Calu3 (cell line): ENCODE measurements at regions of chr18 and their contacts with region 1.

Region 1: GRCh38 chr18:68072744-68073143 is 556.2 kb upstream of the DSEL start:
- DNase-seq: no peak
- H3K4me3 Mint-ChIP-seq: no peak overlapping the region
- H3K27ac Mint-ChIP-seq: no peak overlapping the region
- H3K4me1 Mint-ChIP-seq: no peaks in the 10 kb centered on the region
- H3K27me3 Mint-ChIP-seq: no peaks in the 10 kb centered on the region
- CTCF ChIP-seq: no peak

Region 2: GRCh38 chr18:68017385-68017784 is 55.4 kb before region 1 on chr18:
- CTCF ChIA-PET with region 1: no interaction called
- intact Hi-C with region 1: loop called (anchors 10 kb)
- DNase-seq: no peak
- H3K4me3 Mint-ChIP-seq: no peak overlapping the region
- H3K27ac Mint-ChIP-seq: no peak overlapping the region
- H3K4me1 Mint-ChIP-seq: no peaks in the 10 kb centered on the region
- H3K27me3 Mint-ChIP-seq: no peaks in the 10 kb centered on the region
- CTCF ChIP-seq: no peak

Region 3: DNA sequence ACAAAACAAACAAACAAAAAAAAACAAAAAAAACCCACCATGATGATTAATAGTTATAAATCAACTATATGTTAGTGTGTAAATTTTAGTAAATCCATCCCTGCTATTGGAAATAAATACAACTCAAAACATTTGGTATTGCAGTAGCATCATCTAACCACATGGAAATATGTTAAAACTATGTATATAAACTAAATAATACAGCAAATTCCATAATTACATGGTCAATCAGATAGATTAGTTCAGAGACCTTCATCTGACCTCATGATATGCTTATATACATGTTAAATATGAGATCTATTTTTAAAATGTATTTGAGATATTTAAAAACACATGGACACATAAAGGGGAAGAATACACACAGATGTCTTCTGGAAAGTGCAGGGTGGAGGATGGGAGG is 257.9 kb after region 1 on chr18:
- CTCF ChIA-PET with region 1: interaction called, 13 read pairs
- intact Hi-C with region 1: no loop called
- DNase-seq: no peak
- H3K4me3 Mint-ChIP-seq: no peak overlapping the region
- H3K27ac Mint-ChIP-seq: no peak overlapping the region
- H3K4me1 Mint-ChIP-seq: no peaks in the 10 kb centered on the region
- H3K27me3 Mint-ChIP-seq: no peaks in the 10 kb centered on the region
- CTCF ChIP-seq: no peak